Caco-2 (cell line): ENCODE measurements at regions of chr1 and their contacts with region 1.

Region 1: DNA sequence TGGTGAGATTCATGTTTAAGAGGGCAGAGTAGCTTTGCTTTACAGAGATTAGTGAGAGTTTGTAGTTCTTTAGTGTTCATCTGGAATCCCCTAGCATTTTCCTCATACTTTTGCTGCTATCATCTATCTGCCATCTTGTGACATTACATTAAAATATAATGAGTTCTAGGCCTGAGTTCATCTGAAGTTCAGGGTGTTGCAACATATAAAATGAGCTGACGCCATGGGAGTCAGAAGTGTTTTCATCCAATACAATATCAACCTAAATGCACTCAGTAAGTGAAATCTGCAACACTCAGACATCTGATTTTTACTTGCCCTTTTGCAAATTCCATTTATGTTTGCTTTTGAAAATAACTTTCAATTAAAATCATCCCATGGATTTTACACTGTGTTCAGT is 153.8 kb downstream of the NTNG1 start:
- DNase-seq: no peak
- H3K4me3 ChIP-seq: no peak overlapping the region
- H3K4me3 Mint-ChIP-seq: no peak overlapping the region
- H3K27ac Mint-ChIP-seq: no peak overlapping the region
- H3K4me1 ChIP-seq: no peaks in the 10 kb centered on the region
- H3K4me1 Mint-ChIP-seq: no peaks in the 10 kb centered on the region
- H3K27me3 ChIP-seq: no peaks in the 10 kb centered on the region
- H3K27me3 Mint-ChIP-seq: peaks cover 2% of the 10 kb centered on the region
- CTCF ChIP-seq: no peak

Region 2: DNA sequence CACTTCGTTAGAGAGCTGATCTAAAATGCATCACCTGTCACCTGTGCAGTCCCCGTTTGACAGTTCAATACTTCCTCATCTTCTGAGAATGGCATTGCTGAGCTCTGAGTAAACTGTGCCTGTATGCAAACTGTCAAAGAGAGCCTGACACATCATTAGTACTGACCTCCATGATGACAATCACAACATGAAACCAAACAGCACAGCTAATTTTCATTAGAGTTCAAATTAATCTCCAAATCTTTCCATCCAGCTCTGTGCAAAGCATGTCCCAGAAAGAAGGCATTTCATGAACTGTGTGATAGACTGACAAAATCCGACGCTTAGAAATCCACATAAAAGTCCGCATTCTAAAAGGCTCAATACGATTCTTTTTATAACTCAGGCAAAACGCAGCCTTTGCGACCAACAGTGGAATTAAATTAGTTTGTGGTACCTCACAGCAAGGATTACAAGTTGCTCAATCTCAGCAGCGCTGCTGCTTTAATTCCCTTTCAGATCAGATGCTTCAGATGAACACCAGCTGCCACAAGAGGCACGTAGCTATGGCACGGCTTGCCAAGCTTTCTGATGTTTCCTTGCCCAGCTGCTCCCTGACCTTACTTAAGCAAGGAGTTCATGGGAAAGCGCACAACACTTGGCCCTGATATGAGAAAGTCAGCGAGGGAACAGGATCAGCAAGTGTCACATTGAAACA is 1003.7 kb before region 1 on chr1:
- CTCF ChIA-PET with region 1: no interaction called
- POLR2A ChIA-PET with region 1: no interaction called
- intact Hi-C with region 1: loop called (anchors 5 kb)
- DNase-seq: no peak
- H3K4me3 ChIP-seq: no peak overlapping the region
- H3K4me3 Mint-ChIP-seq: no peak overlapping the region
- H3K27ac Mint-ChIP-seq: no peak overlapping the region
- H3K4me1 ChIP-seq: no peaks in the 10 kb centered on the region
- H3K4me1 Mint-ChIP-seq: no peaks in the 10 kb centered on the region
- H3K27me3 ChIP-seq: no peaks in the 10 kb centered on the region
- H3K27me3 Mint-ChIP-seq: no peaks in the 10 kb centered on the region
- CTCF ChIP-seq: no peak

Region 3: GRCh38 chr1:107277022-107277421 is 17.7 kb before region 1 on chr1:
- CTCF ChIA-PET with region 1: no interaction called
- POLR2A ChIA-PET with region 1: no interaction called
- intact Hi-C with region 1: no loop called
- DNase-seq: peak; percentile 22 to 40
- H3K4me3 ChIP-seq: no peak overlapping the region
- H3K4me3 Mint-ChIP-seq: no peak overlapping the region
- H3K27ac Mint-ChIP-seq: no peak overlapping the region
- H3K4me1 ChIP-seq: no peaks in the 10 kb centered on the region
- H3K4me1 Mint-ChIP-seq: no peaks in the 10 kb centered on the region
- H3K27me3 ChIP-seq: no peaks in the 10 kb centered on the region
- H3K27me3 Mint-ChIP-seq: no peaks in the 10 kb centered on the region
- CTCF ChIP-seq: peak in 1 of 2 experiments; percentile 52

Region 4: DNA sequence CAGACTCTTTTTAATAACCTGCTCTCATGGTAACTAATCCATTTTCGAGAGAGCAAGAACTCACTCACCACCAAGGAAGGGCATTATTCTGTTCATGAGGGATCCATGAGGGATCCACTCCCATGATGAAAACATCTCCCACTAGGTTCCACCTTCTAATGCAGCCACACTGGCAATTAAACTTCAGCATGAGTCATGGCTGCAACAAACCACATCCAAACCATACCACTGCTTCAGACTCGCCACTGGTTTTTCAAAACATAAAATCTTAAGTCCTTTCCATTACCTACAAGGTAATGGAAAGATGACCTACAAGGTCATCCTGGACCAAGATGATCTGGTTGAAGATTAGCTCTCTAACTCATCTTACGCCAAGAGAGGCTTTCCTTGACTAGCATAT is 265.2 kb after region 1 on chr1:
- CTCF ChIA-PET with region 1: no interaction called
- POLR2A ChIA-PET with region 1: no interaction called
- intact Hi-C with region 1: no loop called
- DNase-seq: no peak
- H3K4me3 ChIP-seq: no peak overlapping the region
- H3K4me3 Mint-ChIP-seq: no peak overlapping the region
- H3K27ac Mint-ChIP-seq: no peak overlapping the region
- H3K4me1 ChIP-seq: no peaks in the 10 kb centered on the region
- H3K4me1 Mint-ChIP-seq: no peaks in the 10 kb centered on the region
- H3K27me3 ChIP-seq: no peaks in the 10 kb centered on the region
- H3K27me3 Mint-ChIP-seq: no peaks in the 10 kb centered on the region
- CTCF ChIP-seq: no peak